ENCODE measurements at regions of chr5 and their contacts with region 1.

Region 1: GRCh38 chr5:59768152-59769040 is 125.1 kb downstream of the PDE4D start:
- DNase-seq: peak in 3 of 9 donors; percentile 5 to 17 (median 16)
- ATAC-seq: peak; percentile 61
- H3K4me3 ChIP-seq: peak overlapping the region; percentile 29
- H3K4me3 Mint-ChIP-seq: peak overlapping the region; percentile 39 to 85 (median 72)
- H3K27ac ChIP-seq: peak overlapping the region; percentile 12
- H3K27ac Mint-ChIP-seq: peak overlapping the region in 3 of 9 donors; percentile 36 to 51 (median 46)
- H3K4me1 ChIP-seq: peaks cover 0 to 3% of the 10 kb centered on the region in 2 donors
- H3K4me1 Mint-ChIP-seq: peaks cover 0 to 24% (median 9%) of the 10 kb centered on the region in 7 donors
- H3K27me3 ChIP-seq: peaks cover 0 to 3% of the 10 kb centered on the region in 2 donors
- H3K27me3 Mint-ChIP-seq: peaks cover 34 to 59% (median 35%) of the 10 kb centered on the region in 5 donors

Region 2: GRCh38 chr5:59790399-59791125 is 22.2 kb after region 1 on chr5:
- CTCF ChIA-PET with region 1: no interaction called
- POLR2A ChIA-PET with region 1: no interaction called
- intact Hi-C with region 1: loop called in 1 of 2 experiments (anchors 2 kb)
- DNase-seq: peak in 3 of 9 donors; percentile 6 to 16 (median 11)
- ATAC-seq: peak; percentile 57
- H3K4me3 ChIP-seq: no peak overlapping the region
- H3K4me3 Mint-ChIP-seq: peak overlapping the region in 7 of 10 donors; percentile 2 to 70 (median 25)
- H3K27ac ChIP-seq: no peak overlapping the region
- H3K27ac Mint-ChIP-seq: peak overlapping the region in 6 of 9 donors; percentile 7 to 68 (median 25)
- H3K4me1 ChIP-seq: no peaks in the 10 kb centered on the region
- H3K4me1 Mint-ChIP-seq: peaks cover 0 to 19% (median 2%) of the 10 kb centered on the region in 7 donors
- H3K27me3 ChIP-seq: no peaks in the 10 kb centered on the region
- H3K27me3 Mint-ChIP-seq: peaks cover 5 to 24% (median 13%) of the 10 kb centered on the region in 5 donors

Region 3: GRCh38 chr5:61162010-61162831 is 1393.8 kb after region 1 on chr5 and contains the start of gene SMIM15:
- CTCF ChIA-PET with region 1: no interaction called
- POLR2A ChIA-PET with region 1: no interaction called
- intact Hi-C with region 1: no loop called
- DNase-seq: peak; percentile 59 to 85 (median 70)
- ATAC-seq: peak; percentile 93
- H3K4me3 ChIP-seq: peak within 1 kb of the TSS; percentile 87
- H3K4me3 Mint-ChIP-seq: peak within 1 kb of the TSS; percentile 92 to 98 (median 94)
- H3K27ac ChIP-seq: peak within 1 kb of the TSS; percentile 77
- H3K27ac Mint-ChIP-seq: peak within 1 kb of the TSS; percentile 80 to 98 (median 95)
- H3K4me1 ChIP-seq: peaks cover 8 to 16% of the 10 kb centered on the region in 2 donors
- H3K4me1 Mint-ChIP-seq: peaks cover 5 to 57% (median 46%) of the 10 kb centered on the region in 7 donors
- H3K27me3 ChIP-seq: no peaks in the 10 kb centered on the region
- H3K27me3 Mint-ChIP-seq: no peaks in the 10 kb centered on the region
- total RNA-seq, gene SMIM15: 17.3 to 49.0 (median 34.0) TPM